IMR-90 (cell line): ENCODE measurements at regions of chr2 and their contacts with region 1.

Region 1: DNA sequence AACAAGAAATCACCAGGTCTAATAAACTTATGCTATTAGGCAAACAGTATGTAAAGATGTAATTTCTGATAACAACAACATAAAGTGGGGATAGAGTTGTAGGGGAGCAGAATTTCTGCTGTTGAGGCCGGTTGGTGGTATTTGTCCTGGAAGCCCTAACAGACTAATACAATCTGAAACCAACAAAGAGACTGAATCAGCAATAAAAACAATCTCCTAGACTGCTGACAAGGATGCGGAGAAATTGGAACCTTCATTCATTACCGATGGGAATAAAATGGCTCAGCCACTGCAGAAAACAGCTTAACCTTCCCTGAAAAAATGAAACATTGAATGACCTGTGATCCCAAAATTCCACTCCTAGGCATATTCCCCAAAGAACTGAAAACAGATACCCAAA is 88.7 kb downstream of the GYPC start:
- DNase-seq: no peak
- ATAC-seq: no peak
- H3K4me3 ChIP-seq: no peak overlapping the region
- H3K27ac ChIP-seq: no peak overlapping the region
- H3K4me1 ChIP-seq: no peaks in the 10 kb centered on the region
- H3K27me3 ChIP-seq: no peaks in the 10 kb centered on the region; the same call in 1 of the 2 replicates
- CTCF ChIP-seq: no peak
- POLR2A ChIP-seq: no peak
- RAD21 ChIP-seq: no peak

Region 2: DNA sequence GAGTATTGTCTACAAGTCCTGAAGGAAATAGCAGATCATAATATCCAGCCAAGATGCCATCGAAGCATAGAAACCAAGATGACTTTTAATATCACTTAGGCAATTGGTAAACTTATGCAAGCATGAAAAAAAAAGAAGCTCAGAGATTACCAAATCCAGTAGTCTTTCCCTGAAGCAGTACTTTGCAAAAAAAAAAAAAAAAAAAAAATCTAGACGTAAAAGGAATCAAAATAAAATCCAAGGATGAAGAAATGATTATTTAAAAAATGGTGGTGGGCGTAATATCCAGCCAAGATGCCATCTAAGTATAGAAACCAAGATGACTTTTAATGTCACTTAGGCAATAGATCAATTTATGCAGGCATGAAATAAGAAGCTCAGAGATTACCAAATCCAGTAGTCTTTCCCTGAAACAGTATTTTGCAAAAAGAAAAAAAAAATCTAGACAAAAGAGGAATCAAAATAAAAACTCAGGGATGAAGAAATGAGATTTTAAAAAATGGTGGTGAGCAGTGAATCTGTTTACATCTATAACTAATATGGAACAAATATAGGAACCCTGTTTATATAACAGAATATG is 20.1 kb after region 1 on chr2:
- CTCF ChIA-PET with region 1: no interaction called
- POLR2A ChIA-PET with region 1: interaction called, 12 read pairs
- dilution Hi-C with region 1: no loop called
- in situ Hi-C with region 1: no loop called
- intact Hi-C with region 1: no loop called
- DNase-seq: no peak
- ATAC-seq: no peak
- H3K4me3 ChIP-seq: no peak overlapping the region
- H3K27ac ChIP-seq: no peak overlapping the region
- H3K4me1 ChIP-seq: no peaks in the 10 kb centered on the region
- H3K27me3 ChIP-seq: no peaks in the 10 kb centered on the region; the same call in 1 of the 2 replicates
- CTCF ChIP-seq: no peak
- POLR2A ChIP-seq: no peak
- RAD21 ChIP-seq: no peak